ENCODE measurements at regions of chrX and their contacts with region 1.

Region 1: GRCh38 chrX:54808605-54809483 is 1.3 kb downstream of the MAGED2 start:
- DNase-seq: peak; percentile 85 to 92 (median 90)
- H3K4me3 ChIP-seq: peak overlapping the region; percentile 65 to 86
- H3K4me3 Mint-ChIP-seq: peak overlapping the region; percentile 87 to 96 (median 95)
- H3K27ac ChIP-seq: peak overlapping the region; percentile 80
- H3K27ac Mint-ChIP-seq: peak overlapping the region; percentile 96 to 99 (median 98)
- H3K4me1 ChIP-seq: peaks cover 15% of the 10 kb centered on the region
- H3K4me1 Mint-ChIP-seq: peaks cover 10 to 28% (median 12%) of the 10 kb centered on the region in 4 donors
- H3K27me3 ChIP-seq: no peaks in the 10 kb centered on the region
- H3K27me3 Mint-ChIP-seq: no peaks in the 10 kb centered on the region

Region 2: DNA sequence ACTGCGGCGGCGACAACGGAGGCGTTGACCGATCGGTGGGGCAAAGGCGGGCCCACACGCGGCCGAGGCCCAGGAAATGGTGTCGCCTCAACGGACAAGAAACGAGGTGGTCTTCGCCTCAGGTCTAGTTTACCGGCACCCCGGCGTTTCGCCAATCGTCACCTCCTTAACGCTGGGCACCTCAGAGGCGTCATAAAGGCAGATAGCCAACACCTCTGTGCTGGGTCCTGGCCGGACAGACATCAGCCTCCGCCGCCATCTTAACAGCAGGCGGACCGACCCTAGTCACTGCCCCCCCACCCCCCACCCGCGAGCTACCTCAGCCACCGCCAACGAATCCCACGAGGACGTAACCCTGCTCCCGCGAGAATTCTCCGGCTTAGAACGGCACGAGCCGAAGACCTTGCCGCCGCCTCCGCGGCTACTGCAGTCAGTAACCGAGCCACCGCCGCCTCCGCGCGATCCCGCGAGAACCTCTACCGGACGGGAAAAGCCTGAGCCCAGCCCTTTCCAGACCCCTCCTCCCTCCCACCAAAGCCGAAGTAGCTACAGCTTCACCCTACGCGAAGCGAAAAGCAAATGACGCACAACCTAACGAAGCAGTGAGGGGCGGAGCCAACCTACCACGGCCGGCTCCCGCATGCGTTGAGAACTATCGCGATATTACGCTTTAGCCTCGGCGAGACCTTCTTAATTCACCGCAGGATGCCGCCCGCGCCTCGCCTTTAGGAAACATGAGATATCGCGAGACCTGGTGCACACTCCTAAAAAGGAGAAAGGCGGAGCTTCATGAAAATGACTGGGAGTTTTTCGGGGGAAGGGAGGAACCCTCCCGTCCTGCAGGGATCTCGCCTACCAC is 1125.1 kb before region 1 on chrX:
- CTCF ChIA-PET with region 1: no interaction called
- POLR2A ChIA-PET with region 1: no interaction called
- intact Hi-C with region 1: loop called (anchors 10 kb)
- DNase-seq: peak; percentile 88 to 97 (median 95)
- H3K4me3 ChIP-seq: peak overlapping the region; percentile 65 to 66
- H3K4me3 Mint-ChIP-seq: peak overlapping the region; percentile 88 to 97 (median 90)
- H3K27ac ChIP-seq: peak overlapping the region; percentile 94
- H3K27ac Mint-ChIP-seq: peak overlapping the region; percentile 87 to 99 (median 97)
- H3K4me1 ChIP-seq: peaks cover 41% of the 10 kb centered on the region
- H3K4me1 Mint-ChIP-seq: peaks cover 16 to 52% (median 33%) of the 10 kb centered on the region in 4 donors
- H3K27me3 ChIP-seq: no peaks in the 10 kb centered on the region
- H3K27me3 Mint-ChIP-seq: no peaks in the 10 kb centered on the region

Region 3: DNA sequence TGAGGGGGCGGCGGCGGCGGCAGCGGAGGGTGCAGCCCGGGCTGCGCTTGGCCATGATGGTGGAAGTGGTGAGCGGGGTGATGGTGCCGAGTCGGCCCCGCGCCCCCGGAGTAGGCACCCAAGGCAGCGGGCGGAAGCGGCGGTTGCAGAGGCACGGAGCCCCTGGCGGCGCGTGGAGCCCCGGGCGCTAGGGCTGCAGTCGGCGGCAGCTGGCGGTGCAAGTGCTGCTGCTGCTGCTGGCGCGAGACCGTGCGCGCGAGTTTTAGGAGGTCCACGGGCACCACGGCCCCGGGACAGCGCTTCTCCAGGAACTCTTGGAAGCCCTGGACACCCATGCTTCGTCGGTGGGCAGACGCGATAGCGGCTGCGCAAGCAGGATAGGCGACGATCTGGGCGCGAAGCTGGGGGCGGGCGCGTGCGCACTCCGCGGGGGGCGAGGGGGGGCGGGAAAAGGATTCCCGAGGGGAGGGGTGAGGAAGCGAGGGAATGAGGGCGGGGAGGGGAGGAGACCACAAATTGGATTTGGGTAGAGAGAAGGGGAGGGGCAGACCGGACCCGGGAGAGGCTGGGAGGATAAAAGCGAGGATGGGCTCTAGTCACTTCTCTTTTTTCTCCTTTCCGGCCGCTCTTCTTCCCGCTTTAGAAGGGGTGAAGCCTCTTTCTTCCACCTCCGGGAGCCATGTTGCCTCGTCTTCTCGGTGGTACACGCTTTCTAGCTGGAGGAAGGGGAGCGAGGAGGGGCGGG is 625.8 kb before region 1 on chrX and contains the start of gene FAM120C:
- CTCF ChIA-PET with region 1: no interaction called
- POLR2A ChIA-PET with region 1: interaction called, 3 read pairs
- intact Hi-C with region 1: loop called (anchors 2 kb)
- DNase-seq: peak; percentile 62 to 66 (median 65)
- H3K4me3 ChIP-seq: peak within 1 kb of the TSS; percentile 20 to 63
- H3K4me3 Mint-ChIP-seq: peak within 1 kb of the TSS; percentile 84 to 92 (median 86)
- H3K27ac ChIP-seq: peak within 1 kb of the TSS; percentile 72
- H3K27ac Mint-ChIP-seq: peak within 1 kb of the TSS; percentile 74 to 92 (median 89)
- H3K4me1 ChIP-seq: peaks cover 29% of the 10 kb centered on the region
- H3K4me1 Mint-ChIP-seq: peaks cover 31 to 47% (median 39%) of the 10 kb centered on the region in 4 donors
- H3K27me3 ChIP-seq: no peaks in the 10 kb centered on the region
- H3K27me3 Mint-ChIP-seq: no peaks in the 10 kb centered on the region
- total RNA-seq, gene FAM120C: 17.6 to 21.1 TPM

Region 4: DNA sequence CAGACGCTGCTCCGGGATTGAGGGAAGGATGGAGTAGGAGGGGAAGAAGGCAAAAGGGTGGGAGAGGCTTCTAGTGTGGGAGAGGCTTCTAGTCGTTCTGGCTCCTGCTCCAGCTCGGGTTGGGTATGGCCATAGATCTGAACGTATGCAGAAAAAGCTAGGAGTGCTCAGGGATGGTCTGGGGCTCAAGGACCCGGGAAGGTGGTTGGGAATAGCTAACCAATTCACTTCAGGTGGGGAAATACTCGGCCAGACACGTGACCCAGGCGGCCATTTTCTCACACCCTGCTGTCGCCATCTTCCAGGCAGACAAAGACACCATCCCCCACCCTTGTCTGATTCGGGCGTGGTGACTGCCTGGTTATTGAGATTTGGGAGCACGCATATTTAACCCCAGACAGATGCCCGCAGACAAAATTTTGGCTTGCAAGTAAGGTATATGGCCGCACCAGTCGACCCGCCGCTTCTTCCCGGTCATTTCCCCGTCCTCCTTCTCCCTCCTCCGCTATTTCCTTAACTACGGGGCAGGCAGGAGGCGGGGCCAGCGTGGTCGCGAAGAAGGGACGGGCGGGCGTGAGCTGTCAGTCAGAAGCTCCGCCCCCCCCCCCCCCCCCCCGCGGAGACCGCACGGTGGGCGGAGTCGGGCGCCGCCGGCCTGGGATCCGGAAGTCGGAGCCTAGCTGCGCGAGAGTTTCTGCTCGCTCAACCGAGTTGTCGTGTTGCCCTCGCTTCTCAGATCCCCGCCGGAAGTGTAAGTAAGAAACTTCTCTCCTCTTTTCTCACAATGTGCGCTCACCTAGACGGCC is 279.1 kb before region 1 on chrX and contains the start of gene GNL3L:
- CTCF ChIA-PET with region 1: no interaction called
- POLR2A ChIA-PET with region 1: interaction called, 6 read pairs
- intact Hi-C with region 1: loop called (anchors 2 kb)
- DNase-seq: peak; percentile 79 to 84 (median 82)
- H3K4me3 ChIP-seq: peak within 1 kb of the TSS; percentile 88 to 97
- H3K4me3 Mint-ChIP-seq: peak within 1 kb of the TSS; percentile 91 to 99 (median 95)
- H3K27ac ChIP-seq: peak within 1 kb of the TSS; percentile 73
- H3K27ac Mint-ChIP-seq: peak within 1 kb of the TSS; percentile 91 to 98 (median 96)
- H3K4me1 ChIP-seq: peaks cover 34% of the 10 kb centered on the region
- H3K4me1 Mint-ChIP-seq: peaks cover 19 to 45% (median 30%) of the 10 kb centered on the region in 4 donors
- H3K27me3 ChIP-seq: no peaks in the 10 kb centered on the region
- H3K27me3 Mint-ChIP-seq: no peaks in the 10 kb centered on the region
- total RNA-seq, gene GNL3L: 41.7 to 45.1 TPM

Region 5: DNA sequence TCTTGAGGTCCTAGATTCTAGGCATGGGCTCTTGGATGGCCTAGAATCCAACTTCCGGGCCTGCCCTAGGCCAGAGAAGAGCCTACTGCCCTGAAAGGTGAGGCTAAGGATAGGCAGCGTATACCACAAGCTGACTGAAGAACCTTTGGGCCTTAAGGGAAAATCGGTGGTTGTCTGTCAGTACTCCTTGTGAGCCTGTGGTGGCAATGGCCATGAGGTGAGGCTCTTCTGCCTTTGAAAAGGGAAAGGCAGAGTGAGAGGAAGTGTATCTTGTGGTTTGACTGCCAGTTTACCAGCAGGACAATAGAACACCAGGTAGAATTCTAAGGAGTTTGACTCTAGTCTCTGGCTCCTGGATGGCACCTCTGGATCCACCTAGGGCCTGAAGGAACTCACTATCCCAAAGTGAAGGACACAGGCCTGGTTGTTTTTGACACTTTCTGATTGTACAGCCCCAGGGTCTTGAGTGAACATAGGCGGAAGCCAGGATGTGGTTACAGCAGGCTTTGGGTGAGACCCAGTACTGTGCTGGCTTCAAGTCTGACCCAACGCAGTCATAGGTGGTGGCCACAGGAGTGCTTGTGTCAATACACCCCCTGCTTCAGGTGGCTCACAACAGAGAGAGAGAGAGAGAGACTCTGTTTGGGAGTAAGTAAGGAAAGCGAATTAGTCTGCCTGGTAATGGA is 31.7 kb before region 1 on chrX:
- CTCF ChIA-PET with region 1: interaction called, 4 read pairs
- POLR2A ChIA-PET with region 1: no interaction called
- intact Hi-C with region 1: loop called (anchors 1 kb)
- DNase-seq: no peak
- H3K4me3 ChIP-seq: no peak overlapping the region
- H3K4me3 Mint-ChIP-seq: no peak overlapping the region
- H3K27ac ChIP-seq: no peak overlapping the region
- H3K27ac Mint-ChIP-seq: peak overlapping the region in 3 of 7 donors; percentile 9 to 82 (median 32)
- H3K4me1 ChIP-seq: peaks cover 8% of the 10 kb centered on the region
- H3K4me1 Mint-ChIP-seq: peaks cover 2 to 11% (median 7%) of the 10 kb centered on the region in 4 donors
- H3K27me3 ChIP-seq: no peaks in the 10 kb centered on the region
- H3K27me3 Mint-ChIP-seq: no peaks in the 10 kb centered on the region

Region 6: GRCh38 chrX:54794028-54794427 is 14.8 kb before region 1 on chrX:
- CTCF ChIA-PET with region 1: no interaction called
- POLR2A ChIA-PET with region 1: no interaction called
- intact Hi-C with region 1: no loop called
- DNase-seq: no peak
- H3K4me3 ChIP-seq: no peak overlapping the region
- H3K4me3 Mint-ChIP-seq: no peak overlapping the region
- H3K27ac ChIP-seq: no peak overlapping the region
- H3K27ac Mint-ChIP-seq: no peak overlapping the region
- H3K4me1 ChIP-seq: no peaks in the 10 kb centered on the region
- H3K4me1 Mint-ChIP-seq: no peaks in the 10 kb centered on the region
- H3K27me3 ChIP-seq: no peaks in the 10 kb centered on the region
- H3K27me3 Mint-ChIP-seq: peaks cover 0 to 2% of the 10 kb centered on the region in 2 donors

Region 7: DNA sequence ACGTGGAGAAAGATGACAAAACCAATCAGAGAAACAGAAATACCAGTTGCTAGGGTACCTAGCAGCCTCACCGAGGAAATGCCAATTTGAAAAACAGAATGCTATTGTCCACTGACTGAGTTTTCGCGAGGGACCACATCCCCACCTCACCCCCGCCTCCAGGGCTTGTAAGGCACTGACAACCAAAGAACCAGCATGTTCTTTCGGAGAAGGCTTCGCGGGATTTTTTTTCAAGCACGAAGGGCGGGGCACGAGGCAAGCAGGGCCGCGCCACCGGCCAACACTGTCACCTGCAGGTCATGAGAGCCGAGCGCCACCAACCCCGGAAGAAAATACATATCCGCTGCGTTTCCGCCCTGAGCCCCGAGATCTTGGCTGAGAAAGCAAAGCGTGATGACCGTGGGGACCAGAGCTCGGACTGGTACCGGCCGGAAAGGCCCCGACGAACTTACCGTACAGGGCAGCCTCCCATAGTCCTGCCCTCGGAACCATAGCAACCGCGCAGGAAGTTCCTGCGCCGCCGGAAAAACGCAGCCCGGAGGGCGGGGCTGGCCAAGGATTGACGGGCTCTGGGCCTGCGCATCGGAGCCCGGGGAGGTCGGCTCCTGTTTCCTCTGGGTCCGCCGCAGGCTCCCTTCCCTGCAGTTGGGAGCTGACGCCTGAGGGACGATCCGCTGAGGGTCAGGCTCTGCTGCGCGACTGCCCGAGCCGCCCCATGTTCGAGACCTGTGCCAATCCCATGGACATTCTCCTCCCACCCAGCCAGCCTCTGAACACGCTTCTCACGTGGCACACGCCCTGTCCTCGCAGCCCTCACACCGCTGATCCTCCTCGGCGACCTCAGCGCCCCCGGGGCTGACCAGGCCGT is 352.1 kb after region 1 on chrX:
- CTCF ChIA-PET with region 1: no interaction called
- POLR2A ChIA-PET with region 1: interaction called, 3 read pairs
- intact Hi-C with region 1: loop called (anchors 1 kb)
- DNase-seq: peak; percentile 90 to 94 (median 91)
- H3K4me3 ChIP-seq: peak overlapping the region; percentile 39 to 80
- H3K4me3 Mint-ChIP-seq: peak overlapping the region; percentile 85 to 94 (median 92)
- H3K27ac ChIP-seq: peak overlapping the region; percentile 92
- H3K27ac Mint-ChIP-seq: peak overlapping the region; percentile 93 to 100 (median 98)
- H3K4me1 ChIP-seq: peaks cover 17% of the 10 kb centered on the region
- H3K4me1 Mint-ChIP-seq: peaks cover 4 to 23% (median 10%) of the 10 kb centered on the region in 4 donors
- H3K27me3 ChIP-seq: no peaks in the 10 kb centered on the region
- H3K27me3 Mint-ChIP-seq: no peaks in the 10 kb centered on the region

Measured in CD4-positive, alpha-beta memory T cell (primary cell).